K562 (cell line): ENCODE measurements at regions of chr2 and their contacts with region 1.

Region 1: GRCh38 chr2:218033590-218034496 is 31.0 kb upstream of the TNS1 start:
- DNase-seq: no peak
- ATAC-seq: 0 out of 3 replicates have a peak, but pooled peaks have one; percentile 18
- H3K4me3 ChIP-seq: no peak overlapping the region
- H3K27ac ChIP-seq: no peak overlapping the region
- H3K4me1 ChIP-seq: peaks cover 0 to 4% of the 10 kb centered on the region in 2 experiments; a peak in 1 of 5 replicates
- H3K27me3 ChIP-seq: peaks cover 0 to 30% of the 10 kb centered on the region in 2 experiments; a peak in 1 of 5 replicates
- CTCF ChIP-seq: no peak
- EP300 ChIP-seq: no peak
- POLR2A ChIP-seq: no peak
- RAD21 ChIP-seq: no peak

Region 2: DNA sequence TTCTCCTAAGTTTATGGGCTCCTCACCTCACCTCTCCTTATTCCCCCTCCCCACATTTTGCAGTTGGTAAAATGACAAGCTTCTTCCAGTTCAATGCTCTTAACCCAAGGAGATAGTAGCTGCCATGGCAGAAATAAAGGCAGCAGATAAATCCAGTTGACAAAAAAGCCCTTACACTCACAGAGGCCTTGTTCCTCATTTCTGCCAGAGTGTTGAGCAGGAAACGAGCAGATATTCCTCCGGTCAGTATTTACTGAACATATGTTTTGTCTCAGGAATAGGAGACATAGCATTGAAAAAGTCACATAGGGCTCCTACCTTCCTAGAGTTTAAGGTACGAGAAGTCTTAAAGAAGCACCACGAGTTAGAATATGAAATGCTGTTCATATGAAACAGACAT is 680.3 kb before region 1 on chr2:
- CTCF ChIA-PET with region 1: no interaction called
- POLR2A ChIA-PET with region 1: no interaction called
- in situ Hi-C with region 1: no loop called
- intact Hi-C with region 1: no loop called
- DNase-seq: no peak
- ATAC-seq: no peak
- H3K4me3 ChIP-seq: no peak overlapping the region
- H3K27ac ChIP-seq: no peak overlapping the region
- H3K4me1 ChIP-seq: no peaks in the 10 kb centered on the region
- H3K27me3 ChIP-seq: peaks cover 0 to 1% of the 10 kb centered on the region in 2 experiments; a peak in 2 of 5 replicates
- CTCF ChIP-seq: no peak
- EP300 ChIP-seq: no peak
- POLR2A ChIP-seq: no peak
- RAD21 ChIP-seq: no peak

Region 3: DNA sequence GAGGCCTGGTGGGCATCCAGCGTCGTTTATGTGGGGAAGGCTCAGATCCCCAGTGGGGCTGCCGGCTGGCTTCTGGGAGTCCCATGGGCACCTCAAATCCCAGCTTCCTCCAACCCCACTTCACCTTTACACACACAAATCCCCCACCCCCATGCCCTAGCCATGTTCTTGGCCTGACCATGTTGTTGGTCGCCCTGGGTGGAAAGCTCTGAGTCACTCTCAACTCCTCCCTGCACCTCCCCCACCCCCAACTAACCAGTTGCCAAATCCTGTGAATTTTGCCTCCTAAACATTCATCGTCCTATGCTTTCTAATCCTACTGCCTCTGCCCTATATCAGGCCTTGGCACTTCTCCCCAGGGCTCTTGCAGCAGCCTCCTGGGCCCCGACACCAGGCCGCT is 37.5 kb before region 1 on chr2:
- CTCF ChIA-PET with region 1: no interaction called
- POLR2A ChIA-PET with region 1: no interaction called
- in situ Hi-C with region 1: no loop called
- intact Hi-C with region 1: loop called (anchors 5 kb)
- DNase-seq: peak in 1 of 4 experiments; percentile 13
- ATAC-seq: no peak
- H3K4me3 ChIP-seq: no peak overlapping the region
- H3K27ac ChIP-seq: no peak overlapping the region
- H3K4me1 ChIP-seq: no peaks in the 10 kb centered on the region
- H3K27me3 ChIP-seq: peaks cover 0 to 33% of the 10 kb centered on the region in 2 experiments; a peak in 2 of 5 replicates
- CTCF ChIP-seq: no peak
- EP300 ChIP-seq: no peak
- POLR2A ChIP-seq: no peak
- RAD21 ChIP-seq: no peak